ENCODE measurements at regions of chr3 and their contacts with region 1.

Region 1: GRCh38 chr3:8769088-8769822 is at the start of gene OXTR:
- DNase-seq: peak in 1 of 2 donors; percentile 67
- H3K4me3 ChIP-seq: peak within 1 kb of the TSS; percentile 37 to 68
- H3K27ac ChIP-seq: no peak within 1 kb of the TSS
- H3K4me1 ChIP-seq: peaks cover 0 to 17% of the 10 kb centered on the region in 2 donors
- H3K27me3 ChIP-seq: peaks cover 3% of the 10 kb centered on the region
- CTCF ChIP-seq: peak; percentile 90 to 100 (median 99)
- total RNA-seq, gene OXTR: 150 TPM

Region 2: GRCh38 chr3:8663177-8664061 is 105.8 kb before region 1 on chr3:
- intact Hi-C with region 1: loop called (anchors 5 kb)
- DNase-seq: peak in 1 of 2 donors; percentile 72
- H3K4me3 ChIP-seq: no peak overlapping the region
- H3K27ac ChIP-seq: no peak overlapping the region
- H3K4me1 ChIP-seq: peaks cover 21 to 28% of the 10 kb centered on the region in 2 donors
- H3K27me3 ChIP-seq: no peaks in the 10 kb centered on the region
- CTCF ChIP-seq: peak in 2 of 3 experiments; percentile 57 to 59

Region 3: GRCh38 chr3:9690451-9691450 is 921.5 kb after region 1 on chr3:
- intact Hi-C with region 1: no loop called
- DNase-seq: no peak
- H3K4me3 ChIP-seq: no peak overlapping the region
- H3K27ac ChIP-seq: no peak overlapping the region
- H3K4me1 ChIP-seq: no peaks in the 10 kb centered on the region
- H3K27me3 ChIP-seq: no peaks in the 10 kb centered on the region
- CTCF ChIP-seq: no peak

Measured in ascending aorta (tissue), 2 donors.